Natural killer cell (primary cell): ENCODE measurements at regions of chr9 and their contacts with region 1.

Region 1: DNA sequence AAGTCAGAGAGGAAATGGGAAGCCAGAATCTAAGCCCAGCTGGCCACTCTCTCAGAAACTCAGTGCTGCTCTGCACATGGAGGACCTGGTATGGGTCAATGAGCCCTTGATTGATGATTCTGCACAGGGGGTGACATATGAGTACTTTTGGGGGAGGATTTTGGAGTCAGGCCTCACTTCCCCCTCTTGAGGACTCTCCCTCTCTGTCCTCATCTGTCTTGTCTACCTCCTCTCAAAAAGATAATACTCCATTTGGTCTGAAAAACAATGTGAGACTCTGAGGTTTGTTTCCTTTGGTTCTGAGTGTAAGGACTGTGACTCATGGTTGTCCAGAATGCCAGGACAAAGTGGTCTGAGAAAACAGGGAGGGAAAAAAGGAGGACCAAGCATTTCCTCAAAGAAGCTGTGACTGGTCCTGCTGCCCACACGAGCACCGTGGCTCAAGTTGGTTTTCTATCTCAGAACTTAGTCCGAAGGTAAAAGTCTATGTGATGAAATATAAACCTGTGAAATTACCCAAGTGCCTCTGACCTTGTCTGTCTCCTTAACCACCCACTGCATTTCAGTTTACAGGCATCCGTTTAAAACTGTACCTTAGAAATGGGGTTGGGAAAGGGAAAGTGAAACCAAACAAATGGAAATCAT is 11.1 kb downstream of the TTC39B start:
- DNase-seq: peak; percentile 28 to 77
- ATAC-seq: peak; percentile 53 to 77 (median 61)
- H3K4me3 ChIP-seq: peak overlapping the region; percentile 24
- H3K4me3 Mint-ChIP-seq: peak overlapping the region; percentile 85
- H3K27ac ChIP-seq: peak overlapping the region; percentile 94
- H3K27ac Mint-ChIP-seq: peak overlapping the region; percentile 98 to 100
- H3K4me1 ChIP-seq: peaks cover 77% of the 10 kb centered on the region
- H3K4me1 Mint-ChIP-seq: peaks cover 79 to 86% of the 10 kb centered on the region in 2 donors
- H3K27me3 ChIP-seq: no peaks in the 10 kb centered on the region
- H3K27me3 Mint-ChIP-seq: no peaks in the 10 kb centered on the region
- CTCF ChIP-seq: no peak

Region 2: GRCh38 chr9:15220658-15221318 is 75.1 kb before region 1 on chr9:
- intact Hi-C with region 1: no loop called
- DNase-seq: no peak
- ATAC-seq: no peak
- H3K4me3 ChIP-seq: no peak overlapping the region
- H3K4me3 Mint-ChIP-seq: no peak overlapping the region
- H3K27ac ChIP-seq: no peak overlapping the region
- H3K27ac Mint-ChIP-seq: no peak overlapping the region
- H3K4me1 ChIP-seq: peaks cover 2% of the 10 kb centered on the region
- H3K4me1 Mint-ChIP-seq: peaks cover 36 to 43% of the 10 kb centered on the region in 2 donors
- H3K27me3 ChIP-seq: no peaks in the 10 kb centered on the region
- H3K27me3 Mint-ChIP-seq: no peaks in the 10 kb centered on the region
- CTCF ChIP-seq: no peak

Region 3: DNA sequence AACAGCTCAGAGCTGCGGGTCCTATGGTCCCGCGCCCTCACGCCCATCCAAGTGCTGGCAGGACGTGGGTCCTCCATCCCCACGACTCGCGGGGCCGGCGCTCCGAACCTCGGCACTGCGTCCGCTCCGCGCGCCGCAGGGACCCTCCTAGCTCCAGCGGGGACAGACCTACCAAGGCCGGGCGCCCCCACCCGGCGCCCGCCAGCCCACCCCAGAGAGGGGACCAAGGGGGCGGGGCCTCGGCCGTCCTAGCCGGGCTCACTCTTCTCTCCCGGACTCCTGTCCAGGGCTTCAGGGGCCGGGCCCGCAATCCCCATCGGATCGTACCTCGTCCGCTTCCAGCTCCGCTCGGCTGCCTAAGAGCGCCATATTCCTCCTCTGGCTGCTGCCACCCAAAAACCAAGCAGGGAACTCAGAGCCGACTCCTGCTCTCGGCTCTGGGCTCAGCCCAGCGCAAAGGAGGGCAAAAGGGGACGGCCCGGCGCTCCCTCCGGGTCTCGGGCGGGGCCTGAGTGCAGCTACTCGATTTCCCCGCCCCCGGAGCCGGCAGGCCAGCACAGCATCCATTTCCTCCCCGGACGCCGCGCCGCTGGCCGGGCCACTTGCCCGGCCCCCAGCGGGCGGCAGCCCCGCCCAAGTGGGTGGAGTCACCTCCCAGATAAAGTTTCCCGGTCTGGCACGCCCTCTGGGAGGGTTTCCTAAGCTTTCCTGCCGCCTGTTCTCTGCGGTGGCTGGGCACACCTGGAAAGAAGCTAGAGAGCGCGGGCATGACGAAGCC is 11.1 kb after region 1 on chr9 and contains the start of gene TTC39B:
- intact Hi-C with region 1: loop called (anchors 1 kb)
- DNase-seq: peak; percentile 81 to 87
- ATAC-seq: peak; percentile 89 to 96 (median 91)
- H3K4me3 ChIP-seq: peak within 1 kb of the TSS; percentile 98
- H3K4me3 Mint-ChIP-seq: peak within 1 kb of the TSS; percentile 97
- H3K27ac ChIP-seq: peak within 1 kb of the TSS; percentile 79
- H3K27ac Mint-ChIP-seq: peak within 1 kb of the TSS; percentile 85 to 95
- H3K4me1 ChIP-seq: peaks cover 16% of the 10 kb centered on the region
- H3K4me1 Mint-ChIP-seq: peaks cover 48 to 50% of the 10 kb centered on the region in 2 donors
- H3K27me3 ChIP-seq: no peaks in the 10 kb centered on the region
- H3K27me3 Mint-ChIP-seq: no peaks in the 10 kb centered on the region
- CTCF ChIP-seq: no peak
- total RNA-seq, gene TTC39B: 51.2 to 65.1 (median 54.2) TPM